ENCODE measurements at regions of chr11 and their contacts with region 1.

Region 1: GRCh38 chr11:38968951-38969350 is 2370.9 kb upstream of the RAG2 start:
- DNase-seq: no peak
- H3K4me3 ChIP-seq: no peak overlapping the region
- H3K27ac ChIP-seq: no peak overlapping the region
- H3K4me1 ChIP-seq: peaks cover 20% of the 10 kb centered on the region
- H3K27me3 ChIP-seq: no peaks in the 10 kb centered on the region
- CTCF ChIP-seq: no peak

Region 2: GRCh38 chr11:38900211-38900610 is 68.7 kb before region 1 on chr11:
- CTCF ChIA-PET with region 1: no interaction called
- POLR2A ChIA-PET with region 1: interaction called, 12 read pairs
- intact Hi-C with region 1: no loop called
- DNase-seq: peak; percentile 75
- H3K4me3 ChIP-seq: no peak overlapping the region
- H3K27ac ChIP-seq: no peak overlapping the region
- H3K4me1 ChIP-seq: peaks cover 8% of the 10 kb centered on the region
- H3K27me3 ChIP-seq: no peaks in the 10 kb centered on the region
- CTCF ChIP-seq: no peak

Measured in A673 (cell line).